Right ventricle myocardium superior (tissue), 1 donor: ENCODE measurements at regions of chr17 and their contacts with region 1.

Region 1: GRCh38 chr17:18033442-18034099 is 5.4 kb downstream of the ATPAF2 start:
- DNase-seq: no peak
- ATAC-seq: peak; percentile 87

Region 2: GRCh38 chr17:17959520-17960361 is 73.8 kb before region 1 on chr17:
- intact Hi-C with region 1: no loop called
- DNase-seq: no peak
- ATAC-seq: peak; percentile 9

Region 3: GRCh38 chr17:17994271-17995069 is 39.1 kb before region 1 on chr17:
- intact Hi-C with region 1: loop called (anchors 2 kb)
- DNase-seq: no peak
- ATAC-seq: peak; percentile 88